ENCODE measurements at regions of chr5 and their contacts with region 1.

Region 1: DNA sequence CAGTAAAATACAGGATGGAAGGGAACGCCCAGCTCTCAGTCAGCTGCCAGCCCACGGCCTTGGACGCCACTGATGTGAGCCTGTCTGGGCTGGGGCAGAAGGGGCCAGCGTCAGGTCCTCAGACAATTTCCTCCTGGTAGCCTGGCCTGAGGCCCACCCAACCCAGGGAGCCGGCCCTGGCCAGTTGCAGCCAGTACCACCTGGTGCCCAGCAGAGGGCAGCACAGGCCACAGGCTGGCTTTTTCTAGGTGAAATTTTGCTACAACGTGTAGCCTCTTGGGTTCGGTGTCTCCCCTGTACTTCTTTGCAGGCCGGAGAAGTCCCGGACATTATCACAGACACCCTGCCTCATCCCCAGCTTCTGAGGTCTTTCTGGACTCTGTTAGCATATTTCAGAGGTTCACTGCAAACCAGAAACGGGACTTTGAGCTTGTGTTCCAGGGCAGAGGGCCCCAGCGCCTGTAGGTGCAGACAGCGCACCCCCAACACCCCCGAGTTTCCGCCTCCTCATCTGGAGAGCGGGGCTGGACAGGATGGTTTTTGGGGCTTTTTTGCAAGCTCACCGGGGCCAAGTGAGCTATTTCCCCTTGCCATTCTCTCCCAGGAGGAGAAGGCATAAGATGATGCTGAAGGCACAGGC is 45.9 kb upstream of the KCNMB1 start:
- DNase-seq: peak; percentile 72
- ATAC-seq: peak; percentile 80 to 88

Region 2: DNA sequence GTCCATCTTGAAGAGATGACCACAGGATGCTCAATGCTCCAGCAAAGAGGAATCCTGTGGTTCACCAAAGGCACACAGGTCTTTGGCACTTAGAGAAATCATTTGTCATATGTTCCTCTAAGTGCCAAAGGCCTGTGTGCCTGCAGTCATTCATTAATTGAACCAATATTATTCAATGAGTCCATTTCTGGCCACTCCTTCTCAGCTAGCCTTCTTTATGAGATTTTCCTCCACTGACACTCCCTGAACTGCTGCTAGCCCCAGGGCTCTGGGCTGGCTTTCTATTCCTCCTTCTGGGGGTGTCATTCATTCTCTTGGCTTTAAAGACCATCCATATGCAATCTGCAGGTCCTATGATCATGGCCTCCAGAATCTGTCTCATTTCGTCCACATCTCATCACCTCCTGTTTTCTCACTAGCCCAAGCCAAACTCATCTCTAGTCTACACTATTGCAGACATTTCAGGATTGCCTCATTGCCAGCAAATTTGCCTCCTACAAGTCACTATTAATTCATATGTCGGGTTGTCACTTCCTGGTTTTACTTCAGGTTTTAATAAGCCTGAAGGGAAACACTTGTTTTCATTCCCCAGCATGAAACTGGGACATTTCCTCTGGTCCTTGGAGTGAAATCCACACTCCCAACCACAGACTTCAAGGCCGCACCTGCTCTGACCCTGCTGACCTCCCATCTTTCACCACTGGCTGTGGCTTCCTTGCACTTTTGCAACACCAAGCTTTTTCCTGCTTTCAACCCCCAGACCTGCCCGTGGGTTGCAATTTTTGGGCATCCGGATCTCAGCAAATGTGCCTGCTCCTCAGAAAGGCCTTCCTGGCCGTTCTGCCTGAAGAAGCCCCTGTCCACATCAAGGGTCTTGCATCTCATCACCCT is 103.9 kb after region 1 on chr5:
- intact Hi-C with region 1: no loop called
- DNase-seq: no peak
- ATAC-seq: no peak

Region 3: GRCh38 chr5:170623576-170624181 is 188.6 kb after region 1 on chr5:
- intact Hi-C with region 1: loop called (anchors 2 to 5 kb)
- DNase-seq: peak; percentile 38
- ATAC-seq: peak; percentile 63

Region 4: DNA sequence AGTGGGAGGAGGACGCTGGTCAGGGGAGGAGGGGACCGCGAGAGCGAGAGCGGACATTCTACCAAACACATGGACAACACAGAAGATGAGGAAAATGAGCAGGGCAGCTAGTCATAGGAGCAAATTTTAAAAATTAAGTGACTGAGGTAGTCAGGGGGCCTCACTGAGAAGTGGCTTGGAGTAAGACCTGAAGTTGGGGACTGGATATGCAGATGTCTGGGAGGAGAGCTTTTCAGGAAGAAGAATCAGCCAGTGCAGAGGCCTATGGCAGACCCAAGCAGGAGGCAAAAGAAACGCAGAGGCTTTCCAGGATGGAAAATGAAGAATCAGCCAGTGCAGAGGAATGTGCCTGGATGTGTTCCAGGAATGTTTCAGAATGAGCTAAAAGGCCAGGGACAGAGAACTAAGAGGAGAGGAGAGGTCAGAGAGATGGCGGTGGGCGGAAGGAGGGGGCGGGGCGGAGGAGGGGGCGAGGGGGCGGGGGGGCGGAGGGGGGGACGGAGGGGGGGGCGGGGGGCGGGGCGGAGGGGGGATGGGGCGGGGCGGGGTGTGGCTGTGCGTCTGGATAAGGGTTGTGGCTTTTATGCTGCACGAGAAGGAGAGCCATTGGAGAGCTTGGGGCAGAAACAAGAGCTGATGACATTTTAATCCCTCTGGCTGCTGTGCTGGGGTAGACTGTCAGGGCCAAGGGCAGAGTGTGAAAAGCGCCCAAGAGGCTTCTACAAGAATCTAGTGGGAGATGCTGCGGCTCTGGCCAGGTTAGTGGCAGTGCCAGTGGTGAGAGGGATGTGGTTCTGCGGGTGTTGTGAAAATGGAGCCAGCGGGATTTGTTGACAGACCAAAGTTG is 198.4 kb after region 1 on chr5:
- intact Hi-C with region 1: loop called (anchors 1 to 5 kb)
- DNase-seq: peak; percentile 56
- ATAC-seq: peak; percentile 64 to 77